Natural killer cell (primary cell): ENCODE measurements at regions of chr14 and their contacts with region 1.

Region 1: DNA sequence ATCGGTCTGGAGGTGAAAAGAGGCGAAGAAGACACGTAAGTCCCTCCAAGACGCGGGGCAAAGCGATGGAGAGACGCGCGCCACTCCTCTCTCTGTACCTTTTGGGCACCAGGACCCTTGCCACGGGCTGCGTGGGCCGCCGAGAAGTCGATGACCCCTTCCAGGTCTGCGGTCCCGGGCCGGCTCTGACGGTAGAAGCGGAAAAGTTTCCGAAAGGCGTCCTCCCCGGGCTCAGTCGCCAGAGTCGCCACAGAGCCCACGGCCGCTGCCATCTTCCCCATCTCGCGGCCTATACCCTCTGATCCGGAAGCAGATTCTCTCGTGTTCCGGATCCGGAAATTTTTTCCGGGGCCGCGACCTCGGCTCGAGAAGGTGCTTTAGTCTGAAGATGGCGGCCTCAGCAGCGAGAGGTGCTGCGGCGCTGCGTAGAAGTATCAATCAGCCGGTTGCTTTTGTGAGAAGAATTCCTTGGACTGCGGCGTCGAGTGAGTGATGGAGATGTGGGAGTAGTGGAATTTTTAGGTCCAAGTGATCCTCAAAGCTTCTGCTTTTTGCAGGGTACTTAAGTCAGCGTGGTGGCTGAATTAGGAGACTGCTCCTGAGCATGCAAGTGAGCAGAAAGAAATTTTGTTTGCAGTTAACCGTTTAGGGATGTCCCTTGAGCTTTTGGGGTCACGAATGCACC is at the starts of genes ALKBH1 and SLIRP:
- DNase-seq: peak; percentile 82 to 93
- ATAC-seq: peak; percentile 97 to 99 (median 98)
- H3K4me3 ChIP-seq: peak within 1 kb of the TSS; percentile 88
- H3K4me3 Mint-ChIP-seq: peak within 1 kb of the TSS; percentile 97
- H3K27ac ChIP-seq: peak within 1 kb of the TSS; percentile 30
- H3K27ac Mint-ChIP-seq: peak within 1 kb of the TSS; percentile 89 to 91
- H3K4me1 ChIP-seq: peaks cover 13% of the 10 kb centered on the region
- H3K4me1 Mint-ChIP-seq: peaks cover 32 to 37% of the 10 kb centered on the region in 2 donors
- H3K27me3 ChIP-seq: no peaks in the 10 kb centered on the region
- H3K27me3 Mint-ChIP-seq: no peaks in the 10 kb centered on the region
- CTCF ChIP-seq: no peak
- total RNA-seq, gene ALKBH1: 3.6 to 10.2 (median 7.1) TPM
- total RNA-seq, gene SLIRP: 29.5 to 33.1 (median 31.6) TPM

Region 2: DNA sequence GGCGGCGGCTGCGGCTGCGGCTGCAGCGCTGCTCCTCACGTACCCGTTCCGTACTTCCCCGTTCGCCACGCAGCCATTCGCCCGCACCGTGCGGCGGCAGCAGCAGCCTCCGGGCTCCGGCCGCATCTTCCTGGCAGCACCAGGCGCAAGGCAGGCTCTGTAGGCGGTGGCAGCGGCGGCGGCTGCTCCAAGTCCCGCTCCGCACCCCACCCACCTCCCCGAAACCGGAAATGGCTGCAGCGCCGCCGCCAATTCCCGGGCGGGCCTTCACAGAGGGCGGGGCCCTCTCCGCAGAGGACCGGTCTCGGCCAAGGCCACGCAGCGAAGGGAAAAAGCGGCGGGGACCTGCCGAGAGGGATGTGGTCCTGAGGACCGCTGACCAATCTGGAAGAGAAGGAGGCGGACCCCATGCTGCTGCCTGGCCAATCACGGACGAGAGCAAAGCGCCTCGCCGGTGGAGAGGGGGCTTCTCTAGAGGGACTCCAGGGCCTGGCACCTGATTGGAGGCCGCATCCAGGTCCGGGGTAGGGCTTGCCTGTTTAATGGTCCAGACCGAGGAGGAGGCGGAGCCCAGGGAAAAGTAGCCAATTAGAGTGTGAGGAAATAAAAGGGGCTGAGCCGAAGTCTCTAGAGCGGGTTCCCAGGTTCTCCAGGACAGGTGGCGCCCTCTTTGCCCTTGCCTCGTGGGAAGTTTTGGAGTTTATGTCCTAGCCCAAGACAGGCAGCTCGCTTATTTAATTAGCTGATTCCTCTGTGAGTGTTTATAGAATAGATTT is 91.2 kb before region 1 on chr14 and contains the start of gene SPTLC2:
- intact Hi-C with region 1: loop called (anchors 5 kb)
- DNase-seq: peak; percentile 94 to 99
- ATAC-seq: peak; percentile 92 to 99 (median 94)
- H3K4me3 ChIP-seq: peak within 1 kb of the TSS; percentile 55
- H3K4me3 Mint-ChIP-seq: peak within 1 kb of the TSS; percentile 92
- H3K27ac ChIP-seq: peak within 1 kb of the TSS; percentile 55
- H3K27ac Mint-ChIP-seq: peak within 1 kb of the TSS; percentile 83 to 92
- H3K4me1 ChIP-seq: peaks cover 15% of the 10 kb centered on the region
- H3K4me1 Mint-ChIP-seq: peaks cover 32 to 48% of the 10 kb centered on the region in 2 donors
- H3K27me3 ChIP-seq: no peaks in the 10 kb centered on the region
- H3K27me3 Mint-ChIP-seq: no peaks in the 10 kb centered on the region
- CTCF ChIP-seq: no peak
- total RNA-seq, gene SPTLC2: 35.2 to 58.6 (median 50.4) TPM

Region 3: DNA sequence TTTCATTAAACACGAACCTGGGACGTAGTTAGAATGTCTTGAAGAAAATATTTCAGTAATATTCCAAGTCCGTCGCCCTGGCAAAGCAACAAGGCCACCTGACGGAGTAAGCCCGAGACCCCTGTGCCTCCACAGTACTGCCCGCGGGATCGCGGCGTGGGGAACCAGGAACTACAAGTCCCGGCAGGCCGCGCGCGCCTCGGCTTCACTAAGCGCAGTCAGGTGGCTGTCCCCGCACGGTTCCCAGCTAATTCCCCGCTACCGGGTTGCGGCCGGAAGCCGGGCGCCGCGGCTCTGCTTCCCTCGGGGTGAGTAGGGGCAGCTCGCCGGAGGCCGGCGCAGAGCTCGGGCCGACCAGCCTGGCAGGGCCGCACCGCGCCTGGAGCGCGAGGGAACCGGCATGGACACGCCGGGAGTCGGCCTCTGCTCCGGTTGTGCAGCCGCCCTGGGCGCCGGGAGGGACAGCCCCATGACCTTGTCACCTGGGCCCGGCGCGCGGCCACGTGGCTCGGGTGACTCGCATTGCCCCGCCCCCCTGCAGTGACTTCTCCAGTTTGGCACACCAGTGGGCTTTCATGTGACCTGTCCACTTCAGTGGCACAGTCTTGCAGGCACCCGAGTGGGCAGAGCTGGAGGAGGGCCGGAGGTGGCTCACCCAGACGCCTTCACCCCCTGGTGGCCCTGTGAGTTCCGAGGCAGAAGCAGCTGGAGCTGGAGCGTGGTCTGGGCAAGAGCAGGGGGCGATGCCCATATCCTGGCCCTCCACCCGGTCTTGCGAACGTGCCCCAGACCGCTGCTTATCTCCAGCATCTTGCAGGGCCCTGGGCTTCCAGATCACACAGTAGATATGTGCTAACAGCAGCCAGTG is 92.2 kb after region 1 on chr14 and contains the start of gene ADCK1:
- intact Hi-C with region 1: loop called (anchors 1 kb)
- DNase-seq: peak; percentile 75 to 88
- ATAC-seq: peak; percentile 88 to 93 (median 91)
- H3K4me3 ChIP-seq: peak within 1 kb of the TSS; percentile 54
- H3K4me3 Mint-ChIP-seq: peak within 1 kb of the TSS; percentile 87
- H3K27ac ChIP-seq: peak within 1 kb of the TSS; percentile 67
- H3K27ac Mint-ChIP-seq: peak within 1 kb of the TSS; percentile 80 to 90
- H3K4me1 ChIP-seq: peaks cover 11% of the 10 kb centered on the region
- H3K4me1 Mint-ChIP-seq: peaks cover 5 to 9% of the 10 kb centered on the region in 2 donors
- H3K27me3 ChIP-seq: no peaks in the 10 kb centered on the region
- H3K27me3 Mint-ChIP-seq: no peaks in the 10 kb centered on the region
- CTCF ChIP-seq: peak; percentile 8
- total RNA-seq, gene ADCK1: 8.0 to 9.2 (median 8.5) TPM

Region 4: DNA sequence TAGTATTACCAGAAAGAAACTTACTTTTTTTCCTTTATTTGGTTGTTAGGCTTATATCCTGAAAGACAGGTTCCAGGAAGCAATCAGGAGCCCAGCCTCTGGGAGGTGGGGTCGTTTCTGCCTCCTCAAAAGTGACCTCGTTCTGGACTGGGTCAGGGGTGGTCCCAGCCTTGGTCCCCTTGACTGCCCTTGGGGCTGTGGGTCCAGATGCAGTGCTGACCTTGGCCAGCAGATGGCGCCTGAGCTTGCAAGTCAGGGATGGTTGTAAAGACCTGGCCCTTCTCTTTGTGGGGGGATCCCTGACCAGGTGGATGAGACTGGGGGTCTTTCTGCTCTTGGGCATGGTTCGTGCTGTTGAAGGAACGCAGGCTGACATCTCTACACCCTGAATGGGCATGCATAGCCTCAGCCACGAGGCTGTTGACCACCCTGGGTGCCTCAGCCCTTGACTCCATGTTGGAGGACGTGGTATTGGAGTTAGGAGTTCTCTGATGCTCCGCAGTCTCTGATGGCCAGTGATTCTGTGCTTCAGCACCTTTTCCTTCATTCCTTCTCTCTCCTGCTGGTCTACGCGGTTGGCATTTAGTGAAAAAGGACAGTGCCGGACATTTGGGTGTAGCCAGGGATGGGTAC is 154.4 kb after region 1 on chr14:
- intact Hi-C with region 1: no loop called
- DNase-seq: peak; percentile 74 to 78
- ATAC-seq: peak; percentile 57 to 84 (median 69)
- H3K4me3 ChIP-seq: no peak overlapping the region
- H3K4me3 Mint-ChIP-seq: no peak overlapping the region
- H3K27ac ChIP-seq: no peak overlapping the region
- H3K27ac Mint-ChIP-seq: no peak overlapping the region
- H3K4me1 ChIP-seq: no peaks in the 10 kb centered on the region
- H3K4me1 Mint-ChIP-seq: no peaks in the 10 kb centered on the region
- H3K27me3 ChIP-seq: no peaks in the 10 kb centered on the region
- H3K27me3 Mint-ChIP-seq: no peaks in the 10 kb centered on the region
- CTCF ChIP-seq: peak; percentile 92